ENCODE measurements at regions of chr12 and their contacts with region 1.

Region 1: GRCh38 chr12:3885277-3886094 is 12.3 kb upstream of the PARP11 start:
- DNase-seq: no peak
- H3K4me3 ChIP-seq: peak overlapping the region; percentile 36 to 51 (median 42)
- H3K27ac ChIP-seq: peak overlapping the region; percentile 57 to 73 (median 63)
- H3K4me1 ChIP-seq: peaks cover 0 to 10% (median 2%) of the 10 kb centered on the region in 4 donors
- H3K27me3 ChIP-seq: peaks cover 0 to 11% (median 2%) of the 10 kb centered on the region in 4 donors
- CTCF ChIP-seq: peak; percentile 74 to 88 (median 76)
- EP300 ChIP-seq: no peak
- POLR2A ChIP-seq: no peak

Region 2: DNA sequence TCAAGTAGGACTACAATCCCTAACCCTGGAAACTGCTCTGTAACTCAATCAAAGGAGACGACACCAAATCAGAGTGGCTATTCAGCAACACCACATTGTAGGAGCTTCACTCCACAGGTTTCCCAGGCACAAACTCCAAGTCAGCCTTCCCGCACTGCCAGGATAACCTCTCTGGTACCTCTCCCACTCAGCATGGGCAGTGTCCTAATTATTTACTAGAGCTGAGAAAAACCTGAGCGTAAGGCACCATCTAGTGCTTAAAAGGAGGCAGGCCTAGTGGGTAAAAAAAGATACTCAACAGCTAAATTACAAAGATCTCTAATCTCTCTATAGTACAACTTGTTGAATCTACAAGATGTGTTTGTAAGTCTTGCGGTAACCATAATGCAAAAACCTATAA is 48.4 kb before region 1 on chr12:
- intact Hi-C with region 1: no loop called
- DNase-seq: no peak
- H3K4me3 ChIP-seq: no peak overlapping the region
- H3K27ac ChIP-seq: no peak overlapping the region
- H3K4me1 ChIP-seq: no peaks in the 10 kb centered on the region
- H3K27me3 ChIP-seq: no peaks in the 10 kb centered on the region
- CTCF ChIP-seq: no peak
- EP300 ChIP-seq: no peak
- POLR2A ChIP-seq: no peak

Region 3: GRCh38 chr12:3998968-3999826 is 113.7 kb after region 1 on chr12:
- intact Hi-C with region 1: loop called (anchors 5 kb)
- DNase-seq: no peak
- H3K4me3 ChIP-seq: no peak overlapping the region
- H3K27ac ChIP-seq: no peak overlapping the region
- H3K4me1 ChIP-seq: no peaks in the 10 kb centered on the region
- H3K27me3 ChIP-seq: peaks cover 0 to 5% (median 0%) of the 10 kb centered on the region in 4 donors
- CTCF ChIP-seq: no peak
- EP300 ChIP-seq: no peak
- POLR2A ChIP-seq: no peak

Region 4: DNA sequence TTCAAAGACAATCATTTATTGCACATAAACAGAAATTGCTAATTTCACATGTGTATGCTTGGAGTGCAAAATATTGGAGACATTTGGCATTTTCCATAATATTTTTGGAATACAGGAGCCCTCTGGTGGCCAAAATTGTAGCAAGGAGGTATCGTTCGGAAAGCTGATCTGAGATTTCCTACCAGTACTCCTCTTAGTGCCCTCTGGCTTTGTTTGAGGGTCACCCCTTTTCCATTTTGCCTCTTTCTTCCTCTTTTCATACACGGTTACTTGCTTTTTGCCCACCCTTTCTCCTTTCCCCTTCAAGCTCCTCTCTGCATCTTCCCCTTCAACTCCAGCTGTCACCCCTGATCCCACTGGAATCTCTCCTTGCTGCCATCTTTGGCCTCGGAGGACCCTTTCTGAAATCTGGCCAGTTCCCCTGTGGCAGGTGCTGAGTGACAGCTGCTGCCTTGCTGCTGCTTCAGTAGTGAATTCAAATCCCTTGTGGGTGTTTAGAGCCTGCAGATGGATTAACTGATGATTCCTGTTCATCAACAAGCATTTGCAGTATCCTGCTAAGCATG is 152.3 kb after region 1 on chr12:
- intact Hi-C with region 1: loop called (anchors 2 kb)
- DNase-seq: no peak
- H3K4me3 ChIP-seq: no peak overlapping the region
- H3K27ac ChIP-seq: no peak overlapping the region
- H3K4me1 ChIP-seq: no peaks in the 10 kb centered on the region
- H3K27me3 ChIP-seq: peaks cover 0 to 5% (median 0%) of the 10 kb centered on the region in 4 donors
- CTCF ChIP-seq: peak; percentile 69 to 79 (median 77)
- EP300 ChIP-seq: no peak
- POLR2A ChIP-seq: no peak

Region 5: GRCh38 chr12:4538207-4539160 is 653.0 kb after region 1 on chr12 and contains the start of gene RAD51AP1:
- intact Hi-C with region 1: loop called (anchors 10 kb)
- DNase-seq: peak; percentile 98
- H3K4me3 ChIP-seq: peak within 1 kb of the TSS; percentile 60 to 79 (median 70)
- H3K27ac ChIP-seq: peak within 1 kb of the TSS; percentile 87 to 91 (median 90)
- H3K4me1 ChIP-seq: peaks cover 14 to 29% (median 21%) of the 10 kb centered on the region in 4 donors
- H3K27me3 ChIP-seq: no peaks in the 10 kb centered on the region
- CTCF ChIP-seq: no peak
- EP300 ChIP-seq: peak; percentile 66
- POLR2A ChIP-seq: no peak
- total RNA-seq, gene RAD51AP1: 0.58 to 1.4 (median 0.75) TPM

Measured in esophagus muscularis mucosa (tissue), 4 donors.